GM10248 (cell line): ENCODE measurements at regions of chr15 and their contacts with region 1.

Region 1: DNA sequence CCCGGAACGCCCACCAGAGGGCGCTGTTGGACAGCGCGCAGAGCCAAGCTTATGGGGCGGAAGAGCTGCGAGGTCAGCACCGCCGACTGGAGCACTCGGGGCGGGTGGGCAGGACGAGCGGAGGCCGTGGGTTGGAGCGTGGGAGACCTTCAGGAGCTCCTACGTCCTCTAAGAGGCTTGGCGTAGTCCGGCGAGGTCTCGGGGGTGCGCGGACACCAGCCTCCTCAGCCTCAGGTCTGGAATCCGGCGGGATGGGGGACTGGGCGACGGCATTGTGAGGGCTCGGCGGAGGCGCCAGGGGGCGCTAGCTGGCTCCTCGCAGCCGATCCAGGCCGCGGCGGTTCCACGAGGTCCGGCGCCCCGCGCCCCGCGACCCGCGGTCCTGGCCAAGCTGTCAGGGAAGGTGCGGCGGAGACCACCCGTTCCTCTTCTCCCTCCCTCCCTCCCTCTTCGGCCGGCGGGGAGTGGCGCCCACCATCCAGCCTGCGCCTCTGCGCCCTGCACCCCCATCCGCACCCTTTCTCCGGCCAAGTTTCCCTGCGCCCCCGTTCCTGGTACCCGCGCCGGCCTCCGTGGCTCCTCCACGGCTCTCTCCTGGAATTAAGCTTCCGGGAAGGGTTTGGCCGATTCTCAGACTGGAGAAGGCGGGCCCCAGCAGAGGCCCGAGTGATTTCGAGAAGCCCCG is 24.3 kb upstream of the POLG start:
- DNase-seq: peak; percentile 91
- CTCF ChIP-seq: peak; percentile 97

Region 2: DNA sequence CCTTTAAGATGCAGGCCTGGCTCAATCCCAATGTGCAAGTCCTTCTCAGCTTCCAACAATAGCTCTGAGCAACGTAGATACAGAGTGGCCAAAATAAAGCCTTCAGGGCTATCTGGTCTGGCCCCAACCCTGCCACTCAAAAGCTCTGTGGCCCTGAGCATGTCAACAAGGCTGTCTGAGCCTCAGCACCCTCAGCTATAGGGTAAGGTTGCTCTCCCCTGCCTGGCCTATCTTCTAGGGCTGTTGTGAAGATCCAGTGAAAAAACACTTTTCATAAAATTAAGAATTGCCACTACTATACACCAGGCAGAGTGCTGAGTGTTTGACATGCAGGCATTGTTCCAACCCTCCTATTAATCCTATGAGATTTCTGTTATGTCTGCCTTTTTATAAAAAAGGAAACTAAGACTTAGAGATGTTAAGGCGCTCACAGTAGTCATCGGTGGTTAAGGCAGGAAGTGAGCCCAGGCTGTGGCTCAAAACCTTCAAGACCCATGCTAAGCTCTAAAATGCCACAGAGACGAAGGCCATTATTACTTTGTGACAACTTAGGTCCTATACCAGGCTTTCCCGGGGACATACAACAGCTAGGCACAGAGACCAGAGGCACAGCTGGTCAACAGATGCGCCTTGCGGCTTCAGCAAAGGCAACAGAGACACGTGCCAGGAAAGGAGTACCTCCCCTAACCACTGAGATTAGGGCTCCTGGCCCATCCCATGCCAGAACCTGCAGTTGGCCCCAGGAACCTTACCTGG is 29.4 kb before region 1 on chr15:
- CTCF ChIA-PET with region 1: interaction called, 71 read pairs
- POLR2A ChIA-PET with region 1: no interaction called
- DNase-seq: no peak
- CTCF ChIP-seq: no peak

Region 3: DNA sequence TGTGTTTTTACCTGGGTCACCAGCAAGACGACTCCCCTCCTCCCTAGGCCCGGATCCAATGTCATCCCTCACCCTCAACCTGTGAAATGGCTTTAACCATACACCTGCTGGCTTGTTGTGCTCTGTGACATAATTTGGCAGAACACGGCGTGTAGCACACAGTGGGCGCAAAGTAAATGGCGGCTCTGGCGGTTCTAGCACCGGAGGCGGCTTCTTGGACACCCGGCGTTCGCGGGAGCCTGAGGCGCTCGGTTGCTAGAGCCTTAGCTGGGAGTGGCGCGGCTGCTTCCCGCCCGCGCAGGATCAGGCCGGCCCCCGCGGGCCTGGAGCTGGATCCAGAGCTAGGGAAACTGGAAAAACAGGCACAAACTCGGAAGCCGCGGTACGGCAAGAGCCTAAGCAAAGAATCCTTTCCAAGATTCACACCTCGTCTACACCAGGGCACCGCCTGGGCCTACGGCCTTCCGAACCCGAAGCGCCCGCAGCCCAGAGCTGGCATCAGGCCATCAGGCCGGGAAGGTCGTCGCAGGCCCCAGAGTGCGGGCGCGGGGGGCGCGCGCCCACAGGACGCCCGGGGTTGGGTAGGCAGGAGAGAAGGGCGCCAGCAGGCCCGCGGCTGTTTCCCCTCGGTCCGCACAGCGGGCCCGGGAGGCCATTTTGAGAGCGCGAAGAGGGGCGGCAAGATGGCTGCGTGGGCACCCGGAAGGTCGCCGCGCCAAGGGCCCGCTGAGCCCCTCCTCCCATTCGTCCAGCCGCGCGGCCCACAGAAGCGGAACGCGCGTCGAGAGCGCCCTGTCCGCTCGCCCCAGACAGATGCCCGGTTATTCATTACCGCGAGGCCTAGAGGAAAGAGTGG is 19.6 kb after region 1 on chr15:
- CTCF ChIA-PET with region 1: interaction called, 82 read pairs
- POLR2A ChIA-PET with region 1: no interaction called
- DNase-seq: no peak
- CTCF ChIP-seq: no peak

Region 4: DNA sequence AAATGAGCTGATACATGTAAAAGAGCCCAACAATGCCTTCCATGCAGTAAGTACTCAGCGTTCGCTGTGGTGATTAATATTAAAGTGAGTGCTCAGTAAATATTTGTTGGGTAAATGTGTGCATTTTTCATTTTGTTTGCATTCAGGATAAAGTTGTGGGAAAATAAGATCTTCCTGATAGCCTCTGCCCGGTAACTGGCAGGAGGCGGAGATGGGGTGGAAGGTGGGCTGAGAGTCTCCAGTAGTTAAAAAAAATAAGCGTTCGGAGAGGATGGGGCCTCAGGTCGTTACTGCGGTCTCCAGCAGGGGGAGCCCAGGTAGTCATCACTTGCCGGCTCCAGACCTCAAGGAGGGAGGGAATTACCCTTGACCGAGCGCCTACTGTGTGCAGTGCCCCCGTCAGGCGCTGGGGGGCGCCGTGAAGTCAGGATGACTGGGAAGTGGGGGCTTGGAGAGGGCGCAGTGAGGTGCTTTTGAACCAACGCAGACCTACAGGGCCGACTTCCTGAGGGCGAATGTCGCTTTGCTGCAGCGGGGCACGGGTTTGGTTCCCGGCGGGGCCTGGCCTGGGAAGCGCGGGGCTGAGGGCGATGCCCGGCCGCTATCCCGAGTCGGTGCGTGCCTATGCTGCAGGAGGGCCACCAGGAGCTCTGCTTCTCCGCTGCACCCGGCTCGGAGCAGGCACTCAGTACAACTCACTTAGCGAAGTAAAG is 57.4 kb after region 1 on chr15:
- CTCF ChIA-PET with region 1: interaction called, 22 read pairs
- POLR2A ChIA-PET with region 1: no interaction called
- DNase-seq: peak; percentile 93
- CTCF ChIP-seq: peak; percentile 80

Region 5: DNA sequence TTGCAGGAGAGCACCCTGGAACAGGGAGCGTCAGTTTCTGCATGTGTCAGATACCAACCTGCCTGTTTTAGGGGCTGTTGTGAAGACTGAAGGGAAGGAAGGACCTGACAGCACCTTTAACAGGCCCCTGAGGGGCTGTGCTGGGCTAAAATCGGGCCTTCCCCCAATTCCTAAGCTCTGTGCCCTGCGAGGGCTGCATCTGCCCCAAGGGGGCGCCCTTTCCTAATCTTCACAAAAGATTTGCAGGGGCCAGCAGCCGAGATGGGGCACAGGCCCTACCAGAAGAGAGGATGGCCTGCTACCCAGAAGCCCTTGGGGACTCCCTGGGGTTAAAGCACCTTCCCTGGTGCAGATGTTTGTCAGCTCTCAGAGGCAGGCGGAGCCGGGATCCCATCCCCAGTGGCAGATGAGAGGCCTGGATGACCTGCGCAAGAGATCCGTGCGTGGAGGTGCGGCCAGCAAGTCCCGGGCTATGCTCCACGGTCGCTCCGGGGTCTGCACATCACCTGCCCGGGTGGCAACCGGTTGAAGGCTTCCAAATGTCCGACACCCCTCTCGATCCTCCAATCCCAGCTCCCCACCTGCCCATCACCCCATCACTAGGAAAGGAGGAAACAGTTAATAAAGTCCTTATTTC is 83.9 kb after region 1 on chr15:
- CTCF ChIA-PET with region 1: interaction called, 75 read pairs
- POLR2A ChIA-PET with region 1: no interaction called
- DNase-seq: peak; percentile 82
- CTCF ChIP-seq: peak; percentile 51

Region 6: DNA sequence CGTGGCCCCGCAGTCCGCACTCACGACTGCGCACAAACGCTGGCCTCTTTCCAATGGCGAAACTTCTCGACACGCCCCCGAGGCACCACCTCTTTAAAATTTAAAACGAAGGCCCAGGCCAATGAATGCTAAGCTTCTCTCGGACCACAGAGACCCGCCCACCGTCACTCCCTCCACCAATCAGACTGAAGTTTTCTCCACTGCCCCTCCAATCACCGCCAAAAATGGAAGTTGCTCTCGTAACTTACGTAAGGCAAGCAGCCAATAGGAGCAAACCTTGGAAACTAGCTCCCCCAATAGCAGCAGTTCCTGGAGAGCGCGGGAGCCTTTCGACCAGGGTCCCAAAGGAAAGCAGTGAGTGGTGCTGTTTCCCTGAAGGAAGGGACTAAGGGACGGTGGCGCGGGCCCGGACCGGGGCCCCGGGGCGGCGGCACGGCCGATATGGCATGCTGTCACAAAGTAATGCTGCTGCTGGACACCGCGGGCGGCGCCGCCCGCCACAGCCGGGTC is 216.3 kb after region 1 on chr15 and contains the start of gene TICRR:
- CTCF ChIA-PET with region 1: interaction called, 10 read pairs
- POLR2A ChIA-PET with region 1: no interaction called
- DNase-seq: peak; percentile 95
- CTCF ChIP-seq: no peak